Esophagus squamous epithelium (tissue), 5 donors: ENCODE measurements at regions of chr17 and their contacts with region 1.

Region 1: GRCh38 chr17:21126645-21127510 is at the start of gene DHRS7B:
- DNase-seq: peak; percentile 56
- H3K4me3 ChIP-seq: peak within 1 kb of the TSS; percentile 62 to 98 (median 73)
- H3K27ac ChIP-seq: peak within 1 kb of the TSS; percentile 90 to 98 (median 96)
- H3K4me1 ChIP-seq: peaks cover 8 to 49% (median 13%) of the 10 kb centered on the region in 3 donors
- H3K27me3 ChIP-seq: peaks cover 0 to 3% (median 0%) of the 10 kb centered on the region in 4 donors
- CTCF ChIP-seq: peak in 1 of 6 experiments; percentile 6
- POLR2A ChIP-seq: peak in 2 of 4 donors; percentile 69 to 75
- total RNA-seq, gene DHRS7B: 18.8 to 32.4 (median 22.3) TPM

Region 2: DNA sequence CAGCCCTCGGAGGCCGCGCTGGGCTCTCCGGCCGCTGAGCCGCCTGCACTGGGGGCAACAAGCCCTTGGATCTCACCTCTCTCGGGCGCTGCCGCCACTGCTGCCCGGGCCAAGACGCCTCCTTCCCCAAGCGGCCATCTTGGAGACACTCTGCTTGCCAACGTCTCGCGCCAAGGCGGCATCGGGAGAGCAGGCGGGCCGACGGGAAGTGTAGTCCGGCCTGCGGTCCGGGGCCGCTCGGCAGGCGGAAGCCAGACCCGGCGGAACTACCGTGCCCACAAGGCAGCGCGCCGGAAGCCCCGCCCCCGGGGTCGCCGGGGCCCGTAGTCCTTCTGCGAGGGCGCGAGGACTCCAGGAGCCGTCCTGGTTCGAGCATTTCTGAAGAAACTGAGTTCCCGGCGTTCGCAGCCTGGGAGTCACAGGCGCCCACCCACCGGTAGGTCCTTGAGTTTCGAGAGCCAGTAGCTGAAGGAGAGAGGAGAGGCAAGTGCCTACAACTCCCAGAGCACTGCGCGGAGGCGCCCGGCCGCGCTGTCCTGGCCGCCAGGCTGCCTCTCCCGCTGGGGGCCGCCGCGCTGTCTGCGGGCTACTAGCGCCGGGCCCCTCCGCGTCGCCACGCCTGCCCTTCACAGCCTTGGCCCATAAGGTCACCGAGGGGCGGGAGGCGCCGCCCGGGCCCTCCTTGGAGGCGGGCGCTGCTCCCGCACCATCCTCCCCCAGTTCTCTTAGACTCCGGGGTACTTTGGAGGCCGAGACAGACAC is 87.3 kb after region 1 on chr17 and contains the start of gene TMEM11:
- intact Hi-C with region 1: loop called (anchors 10 kb)
- DNase-seq: peak; percentile 74
- H3K4me3 ChIP-seq: peak within 1 kb of the TSS; percentile 93 to 97 (median 95)
- H3K27ac ChIP-seq: peak within 1 kb of the TSS; percentile 95 to 97 (median 96)
- H3K4me1 ChIP-seq: peaks cover 38 to 58% (median 45%) of the 10 kb centered on the region in 3 donors
- H3K27me3 ChIP-seq: no peaks in the 10 kb centered on the region
- CTCF ChIP-seq: peak in 3 of 6 experiments; percentile 12 to 20 (median 12)
- POLR2A ChIP-seq: peak in 2 of 4 donors; percentile 52 to 89
- total RNA-seq, gene TMEM11: 17.8 to 29.0 (median 20.2) TPM

Region 3: DNA sequence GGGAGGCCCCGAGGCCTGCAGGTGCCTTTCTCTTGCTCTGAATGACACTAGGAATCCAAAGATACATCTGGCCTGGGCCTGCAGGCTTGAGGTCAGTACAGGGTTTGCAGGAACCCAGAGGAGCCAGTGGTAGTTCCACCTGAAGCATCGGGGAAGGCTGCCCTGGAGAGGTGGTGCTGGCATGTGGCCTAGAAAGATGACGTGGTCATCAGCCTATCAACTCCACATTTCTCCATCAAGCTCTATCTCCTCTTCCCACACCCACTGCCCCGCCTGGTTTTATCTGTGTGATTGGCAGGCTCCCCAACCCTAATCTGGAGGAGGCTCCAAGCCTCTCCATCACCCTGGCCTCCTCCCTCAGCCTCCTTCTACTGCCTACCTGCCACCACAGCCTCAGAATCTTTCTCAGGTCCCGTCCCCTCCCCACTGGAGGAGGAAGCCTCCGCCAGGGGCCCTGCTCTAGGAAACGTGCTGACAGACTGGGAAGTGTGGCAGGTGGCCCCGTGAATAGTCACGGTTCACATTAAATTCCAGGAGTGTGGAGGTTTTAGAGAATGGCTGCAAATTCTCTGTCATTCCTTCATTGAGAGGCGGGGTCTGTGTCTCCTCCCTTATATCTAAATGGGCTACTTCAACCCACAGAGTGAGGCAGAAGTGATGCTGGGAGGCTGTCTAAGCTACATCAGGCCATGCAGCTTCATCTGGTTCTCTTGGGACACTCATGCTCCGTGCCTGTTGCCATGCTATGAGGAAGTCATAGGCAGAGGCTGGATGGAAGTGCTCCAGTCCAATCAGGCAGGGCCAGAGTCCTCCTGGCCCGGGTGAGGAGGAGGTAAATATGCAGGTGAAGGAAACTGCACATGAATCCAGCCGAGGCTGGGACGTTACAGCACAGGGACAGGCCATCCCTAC is 146.3 kb after region 1 on chr17:
- intact Hi-C with region 1: loop called (anchors 5 kb)
- DNase-seq: no peak
- H3K4me3 ChIP-seq: no peak overlapping the region
- H3K27ac ChIP-seq: no peak overlapping the region
- H3K4me1 ChIP-seq: peaks cover 5 to 31% (median 11%) of the 10 kb centered on the region in 3 donors
- H3K27me3 ChIP-seq: no peaks in the 10 kb centered on the region
- CTCF ChIP-seq: no peak
- POLR2A ChIP-seq: no peak

Region 4: GRCh38 chr17:21388066-21388465 is 261.2 kb after region 1 on chr17:
- intact Hi-C with region 1: no loop called
- DNase-seq: no peak
- H3K4me3 ChIP-seq: no peak overlapping the region
- H3K27ac ChIP-seq: no peak overlapping the region
- H3K4me1 ChIP-seq: peaks cover 0 to 5% (median 0%) of the 10 kb centered on the region in 3 donors
- H3K27me3 ChIP-seq: peaks cover 0 to 9% (median 0%) of the 10 kb centered on the region in 4 donors
- CTCF ChIP-seq: no peak
- POLR2A ChIP-seq: no peak